ENCODE measurements at regions of chr6 and their contacts with region 1.

Region 1: DNA sequence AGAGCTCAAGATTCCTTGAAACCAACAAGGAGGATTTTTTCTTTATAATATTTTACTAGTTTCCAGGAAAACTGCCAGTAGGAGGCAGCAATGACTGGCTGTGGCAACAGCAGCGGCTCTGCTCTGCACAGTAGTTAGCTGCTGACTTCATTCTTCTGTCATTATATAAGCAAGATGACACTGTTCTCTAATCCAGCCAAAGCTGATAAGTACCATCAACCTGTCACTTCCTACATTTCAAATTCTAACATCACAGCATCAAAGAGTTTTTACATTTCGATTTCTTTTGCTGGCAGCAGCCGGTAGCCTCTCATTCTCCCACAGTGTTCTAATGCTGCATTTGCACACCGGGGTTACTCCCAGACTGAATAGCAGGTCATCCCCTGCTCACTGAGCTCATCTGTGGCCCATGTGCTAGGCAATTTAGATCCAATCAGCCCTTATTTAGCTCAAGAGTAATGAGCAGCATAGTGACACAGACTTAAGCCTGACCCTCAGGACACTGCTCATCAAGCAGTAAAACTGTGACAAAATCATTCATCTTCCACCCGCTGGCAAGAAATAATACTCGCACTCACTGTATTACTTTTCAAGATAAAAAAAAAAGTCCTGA is 67.8 kb downstream of the MMS22L start:
- H3K4me3 ChIP-seq: no peak overlapping the region
- H3K27ac ChIP-seq: no peak overlapping the region
- H3K4me1 ChIP-seq: no peaks in the 10 kb centered on the region
- CTCF ChIP-seq: no peak

Region 2: DNA sequence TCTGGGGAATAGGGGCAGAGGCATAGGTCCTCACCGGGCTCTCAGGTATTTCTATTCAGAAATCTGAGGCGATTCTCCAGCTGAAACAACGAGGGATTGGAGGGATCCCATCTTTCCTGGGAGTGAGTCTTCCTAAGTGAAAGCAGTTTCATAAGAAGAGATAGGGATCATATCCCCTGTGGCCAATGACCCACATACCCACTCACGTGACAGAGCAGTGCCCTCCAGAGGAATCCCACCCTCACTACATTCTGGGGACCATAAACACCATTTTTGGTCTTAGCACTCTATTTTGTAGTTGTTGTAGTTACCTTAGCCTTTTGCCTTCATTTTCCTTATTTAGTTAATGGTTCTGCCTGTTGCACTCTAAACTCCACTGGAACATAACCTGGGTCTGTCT is 499.0 kb before region 1 on chr6:
- CTCF ChIA-PET with region 1: no interaction called
- POLR2A ChIA-PET with region 1: no interaction called
- H3K4me3 ChIP-seq: no peak overlapping the region
- H3K27ac ChIP-seq: no peak overlapping the region
- H3K4me1 ChIP-seq: no peaks in the 10 kb centered on the region
- CTCF ChIP-seq: no peak

Region 3: DNA sequence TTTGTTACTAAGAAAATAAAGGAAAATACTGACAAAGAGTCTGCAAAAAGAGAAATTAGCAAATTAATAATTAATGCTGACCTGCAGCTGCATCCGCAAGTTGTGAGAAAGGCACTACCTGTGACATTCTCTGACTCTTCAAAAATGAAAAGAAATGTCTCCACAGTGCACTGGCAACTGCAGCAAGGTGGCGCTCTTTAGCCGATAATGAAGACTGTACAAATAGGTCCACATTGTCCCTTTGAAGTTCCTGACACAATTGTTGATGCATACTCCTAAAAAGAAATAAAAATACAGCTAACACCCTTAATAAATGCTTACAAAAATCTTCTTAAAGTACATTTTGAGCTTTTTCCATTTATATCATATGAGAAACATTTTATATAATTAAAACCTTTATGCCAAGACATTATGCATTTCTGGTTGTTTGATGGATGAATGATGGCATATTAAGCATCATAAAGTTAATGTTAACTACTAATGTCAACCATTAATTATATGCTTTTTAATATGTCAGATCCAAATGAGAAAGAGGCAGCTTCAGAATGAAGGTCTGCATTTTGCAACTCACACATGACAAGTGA is 28.8 kb before region 1 on chr6:
- CTCF ChIA-PET with region 1: interaction called, 16 read pairs
- POLR2A ChIA-PET with region 1: no interaction called
- H3K4me3 ChIP-seq: no peak overlapping the region
- H3K27ac ChIP-seq: no peak overlapping the region
- H3K4me1 ChIP-seq: no peaks in the 10 kb centered on the region
- CTCF ChIP-seq: peak; percentile 56

Region 4: DNA sequence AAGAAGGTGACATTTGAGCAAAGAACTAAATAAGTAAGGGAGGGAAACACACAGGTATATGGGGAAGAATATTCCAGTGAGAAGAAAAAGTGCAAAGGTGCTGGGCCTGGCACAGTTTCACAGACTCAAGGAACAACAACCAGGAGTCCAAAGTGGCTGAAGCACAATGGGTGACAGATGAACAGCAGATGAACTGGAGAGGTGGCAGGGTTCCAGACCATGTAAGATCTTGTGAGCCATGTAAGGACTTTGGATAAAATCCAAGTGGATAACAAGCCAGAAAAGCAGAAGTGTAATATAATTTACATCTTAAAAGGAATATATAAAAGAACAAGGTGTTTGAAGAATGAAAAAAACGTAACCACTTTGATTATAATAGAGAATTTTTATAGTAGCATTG is 20.1 kb before region 1 on chr6:
- CTCF ChIA-PET with region 1: interaction called, 32 read pairs
- POLR2A ChIA-PET with region 1: no interaction called
- H3K4me3 ChIP-seq: no peak overlapping the region
- H3K27ac ChIP-seq: no peak overlapping the region
- H3K4me1 ChIP-seq: no peaks in the 10 kb centered on the region
- CTCF ChIP-seq: no peak

Region 5: DNA sequence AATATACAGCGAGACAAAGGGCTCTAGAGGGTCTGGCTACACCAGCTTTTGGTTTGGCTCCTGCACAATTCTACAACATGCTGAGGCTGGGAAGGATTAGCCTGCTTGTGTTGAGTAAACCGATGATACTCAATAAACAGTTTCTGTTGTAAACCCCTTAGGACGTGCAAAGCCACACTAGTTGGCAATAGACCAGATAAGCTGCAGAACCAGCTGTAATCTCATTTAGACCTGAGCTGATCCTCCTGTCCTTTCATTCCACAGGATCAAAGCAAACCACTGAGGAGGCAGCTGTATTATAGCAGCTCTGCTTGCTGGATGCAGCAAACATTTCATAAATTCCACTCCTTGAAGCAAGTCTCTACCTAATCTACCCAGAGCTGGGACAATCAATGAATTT is 11.9 kb before region 1 on chr6:
- CTCF ChIA-PET with region 1: interaction called, 32 read pairs
- POLR2A ChIA-PET with region 1: no interaction called
- H3K4me3 ChIP-seq: no peak overlapping the region
- H3K27ac ChIP-seq: no peak overlapping the region
- H3K4me1 ChIP-seq: 0 out of 2 replicates have a peak, but pooled peaks cover 4% of the 10 kb centered on the region
- CTCF ChIP-seq: no peak

Region 6: GRCh38 chr6:97231911-97232310 is 16.6 kb after region 1 on chr6:
- CTCF ChIA-PET with region 1: interaction called, 16 read pairs
- POLR2A ChIA-PET with region 1: interaction called, 4 read pairs
- H3K4me3 ChIP-seq: no peak overlapping the region
- H3K27ac ChIP-seq: no peak overlapping the region
- H3K4me1 ChIP-seq: no peaks in the 10 kb centered on the region
- CTCF ChIP-seq: no peak

Region 7: DNA sequence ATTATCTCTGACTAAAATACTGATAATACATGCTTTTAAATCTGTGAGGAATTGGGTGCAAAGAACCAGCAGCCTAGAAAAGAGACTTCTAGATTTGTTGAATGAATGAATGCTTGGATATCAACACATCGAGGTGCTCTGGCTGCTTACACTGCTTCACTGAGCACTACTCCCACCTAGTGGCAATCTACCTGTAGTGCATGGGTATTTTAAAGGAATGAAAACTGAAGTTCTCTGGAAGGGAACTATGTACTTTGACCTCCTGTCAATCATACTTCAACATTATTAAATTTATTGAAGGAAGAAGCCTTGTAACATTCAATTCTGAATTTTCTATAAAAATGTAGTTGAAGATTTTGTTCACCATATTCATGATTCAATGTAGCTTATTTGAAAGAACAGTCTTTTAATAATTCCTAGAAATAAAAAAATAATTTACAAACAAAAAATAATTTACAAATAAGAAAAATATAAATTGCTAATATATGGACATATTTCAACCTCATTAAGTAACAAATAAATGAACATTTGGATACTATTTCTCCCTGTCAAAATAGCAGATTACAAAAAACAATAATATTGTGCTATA is 179.0 kb after region 1 on chr6:
- CTCF ChIA-PET with region 1: interaction called, 21 read pairs
- POLR2A ChIA-PET with region 1: no interaction called
- H3K4me3 ChIP-seq: no peak overlapping the region
- H3K27ac ChIP-seq: no peak overlapping the region
- H3K4me1 ChIP-seq: no peaks in the 10 kb centered on the region
- CTCF ChIP-seq: peak; percentile 47; the same call in 1 of the 2 replicates

Measured in HEK293 (cell line).